PC-9 (cell line): ENCODE measurements at regions of chr2 and their contacts with region 1.

Region 1: DNA sequence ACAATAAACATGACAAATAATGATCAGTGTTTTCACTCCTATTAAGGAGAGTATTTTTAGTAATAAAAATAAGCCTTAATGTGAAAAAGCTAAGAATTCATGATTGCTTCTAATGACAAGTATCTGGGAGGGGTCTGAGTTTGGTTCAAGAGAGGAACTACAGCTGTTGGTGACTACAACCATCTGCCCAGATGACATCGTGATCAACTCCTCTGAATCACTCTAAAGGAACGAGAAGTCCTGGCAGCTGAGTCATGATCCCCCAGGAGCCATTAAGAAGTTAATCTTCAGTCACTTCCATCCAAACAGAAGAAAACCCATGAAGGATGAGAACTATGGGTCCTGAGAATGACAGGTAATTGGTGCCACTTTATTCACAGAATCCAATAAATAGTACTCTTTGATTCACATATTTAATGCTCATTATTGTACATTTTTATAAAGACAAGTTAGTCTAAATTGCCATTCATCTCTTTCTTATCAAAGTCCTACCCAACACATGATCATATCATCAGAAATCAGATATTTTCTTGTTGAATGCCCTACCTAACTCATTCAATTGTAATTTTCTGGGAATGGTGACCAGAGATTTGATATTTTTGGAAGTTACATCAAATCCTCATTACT is 6.8 kb downstream of the TFPI start:
- DNase-seq: peak; percentile 42 to 66
- H3K4me3 ChIP-seq: no peak overlapping the region
- H3K27ac ChIP-seq: 0 out of 2 replicates have a peak overlapping the region, but pooled peaks have one; percentile 23
- H3K4me1 ChIP-seq: no peaks in the 10 kb centered on the region
- H3K27me3 ChIP-seq: no peaks in the 10 kb centered on the region
- CTCF ChIP-seq: no peak

Region 2: DNA sequence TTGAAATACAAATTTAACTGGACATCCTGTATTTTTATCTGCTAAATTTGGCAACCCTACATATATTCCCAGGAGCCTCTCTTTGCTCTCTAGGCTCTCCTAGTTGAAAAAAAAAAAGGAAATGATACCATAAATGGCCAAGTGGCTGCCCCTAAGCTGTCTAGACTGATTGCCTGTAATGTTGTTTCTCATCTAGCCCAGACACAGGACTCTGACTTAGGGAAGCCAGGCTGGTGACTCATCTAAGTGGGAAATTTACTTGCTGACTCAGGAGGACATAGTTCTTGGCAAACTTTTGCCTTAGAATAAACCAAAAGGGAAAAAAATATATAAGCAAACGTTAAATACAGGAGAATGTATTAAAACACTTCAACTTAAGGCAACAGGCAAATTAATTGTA is 972.2 kb before region 1 on chr2:
- CTCF ChIA-PET with region 1: no interaction called
- POLR2A ChIA-PET with region 1: no interaction called
- intact Hi-C with region 1: loop called (anchors 10 kb)
- DNase-seq: peak; percentile 47 to 89
- H3K4me3 ChIP-seq: no peak overlapping the region
- H3K27ac ChIP-seq: peak overlapping the region; percentile 57
- H3K4me1 ChIP-seq: peaks cover 21% of the 10 kb centered on the region
- H3K27me3 ChIP-seq: no peaks in the 10 kb centered on the region
- CTCF ChIP-seq: no peak

Region 3: DNA sequence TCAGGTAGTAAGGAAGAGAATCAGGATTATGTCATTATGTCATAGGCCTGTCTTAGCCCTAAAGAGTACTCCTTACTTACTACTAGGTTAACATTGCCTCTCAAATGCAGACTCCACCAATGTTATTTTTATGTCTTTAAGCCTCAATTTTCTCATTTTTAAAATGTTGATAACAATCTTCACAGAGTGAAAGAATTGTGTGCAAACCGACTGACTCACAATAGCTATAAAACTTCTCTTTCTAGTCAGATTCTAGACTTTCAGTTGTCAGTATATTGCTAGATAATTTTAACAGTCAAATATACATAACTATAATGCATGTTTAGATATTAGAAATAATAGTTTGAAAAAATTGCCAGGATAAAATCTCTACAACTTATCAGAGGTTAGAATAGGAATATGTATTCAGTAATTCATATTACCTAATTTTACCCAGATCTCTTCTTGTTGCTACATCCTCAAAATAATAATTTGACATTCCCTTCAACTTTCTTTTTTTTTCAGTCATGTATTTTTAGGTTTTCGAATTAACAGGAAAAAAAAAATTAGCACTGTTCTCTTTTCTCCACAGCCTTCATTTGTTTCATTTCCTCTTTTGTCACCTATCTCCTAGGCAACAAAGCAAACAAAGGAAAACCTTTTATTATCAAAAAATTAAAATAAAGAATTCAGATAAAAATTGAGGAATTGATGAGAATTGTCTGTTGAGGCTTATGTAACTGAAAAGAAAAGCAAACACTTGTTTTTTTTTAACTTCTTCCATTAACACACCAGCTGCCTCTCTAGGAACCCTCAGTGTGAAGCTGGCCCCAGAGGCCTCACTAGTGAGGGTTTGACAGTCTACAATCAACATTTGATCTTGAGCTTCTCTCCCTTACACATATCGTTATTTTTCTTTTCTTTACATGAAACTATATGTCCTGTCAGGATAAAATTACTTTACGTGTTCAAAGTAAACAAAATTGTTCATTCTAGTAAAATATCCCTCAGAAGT is 378.4 kb before region 1 on chr2:
- CTCF ChIA-PET with region 1: no interaction called
- POLR2A ChIA-PET with region 1: no interaction called
- intact Hi-C with region 1: no loop called
- DNase-seq: no peak
- H3K4me3 ChIP-seq: no peak overlapping the region
- H3K27ac ChIP-seq: no peak overlapping the region
- H3K4me1 ChIP-seq: no peaks in the 10 kb centered on the region
- H3K27me3 ChIP-seq: no peaks in the 10 kb centered on the region
- CTCF ChIP-seq: no peak

Region 4: GRCh38 chr2:188291617-188292347 is 744.3 kb after region 1 on chr2 and contains the start of gene GULP1:
- CTCF ChIA-PET with region 1: no interaction called
- POLR2A ChIA-PET with region 1: interaction called, 10 read pairs
- intact Hi-C with region 1: no loop called
- DNase-seq: peak; percentile 53 to 59
- H3K4me3 ChIP-seq: peak within 1 kb of the TSS; percentile 83
- H3K27ac ChIP-seq: peak within 1 kb of the TSS; percentile 80
- H3K4me1 ChIP-seq: peaks cover 22% of the 10 kb centered on the region
- H3K27me3 ChIP-seq: no peaks in the 10 kb centered on the region
- CTCF ChIP-seq: peak; percentile 57; the same call in 1 of the 2 replicates
- total RNA-seq, gene GULP1: 31.5 and 38.0 TPM in 2 replicates

Region 5: GRCh38 chr2:188391354-188391753 is 843.9 kb after region 1 on chr2:
- CTCF ChIA-PET with region 1: no interaction called
- POLR2A ChIA-PET with region 1: interaction called, 18 read pairs
- intact Hi-C with region 1: no loop called
- DNase-seq: no peak
- H3K4me3 ChIP-seq: no peak overlapping the region
- H3K27ac ChIP-seq: no peak overlapping the region
- H3K4me1 ChIP-seq: no peaks in the 10 kb centered on the region
- H3K27me3 ChIP-seq: no peaks in the 10 kb centered on the region
- CTCF ChIP-seq: no peak